Dendritic cell treated with granulocyte-macrophage colony-stimulating factor and Interleukin-4, amounts not matched to agents 40 ng/mL and 50 ng/mL, for 4 days (primary cell): ENCODE measurements at regions of chr15 and their contacts with region 1.

Region 1: DNA sequence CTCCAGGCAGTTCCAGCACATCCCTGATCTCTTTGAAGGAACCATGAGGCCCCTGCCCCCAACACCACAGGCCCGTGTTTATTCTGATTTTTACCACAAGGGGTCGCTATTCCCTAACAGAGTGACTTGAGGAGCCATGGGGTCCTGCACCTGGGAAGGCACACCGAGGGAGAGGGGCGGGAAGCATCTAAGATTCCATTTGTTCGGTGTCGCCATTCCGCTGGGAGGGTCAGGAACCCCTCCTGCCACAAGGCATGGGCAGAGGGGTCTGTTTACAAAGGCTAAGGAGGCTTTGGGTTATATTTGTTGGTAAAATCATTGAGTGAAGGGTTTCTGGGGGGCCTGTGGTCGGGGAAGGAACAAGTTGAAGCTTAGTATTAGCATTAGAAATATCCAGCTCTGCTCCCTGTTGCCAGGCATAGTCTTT is 77.1 kb downstream of the WDR76 start:
- H3K4me3 Mint-ChIP-seq: no peak overlapping the region
- H3K27ac Mint-ChIP-seq: no peak overlapping the region
- H3K4me1 Mint-ChIP-seq: peaks cover 5% of the 10 kb centered on the region
- H3K27me3 Mint-ChIP-seq: peaks cover 2% of the 10 kb centered on the region

Region 2: GRCh38 chr15:44215594-44215993 is 311.7 kb after region 1 on chr15:
- intact Hi-C with region 1: loop called (anchors 10 kb)
- H3K4me3 Mint-ChIP-seq: no peak overlapping the region
- H3K27ac Mint-ChIP-seq: no peak overlapping the region
- H3K4me1 Mint-ChIP-seq: no peaks in the 10 kb centered on the region
- H3K27me3 Mint-ChIP-seq: peaks cover 12% of the 10 kb centered on the region